Panc1 (cell line): ENCODE measurements at regions of chr10 and their contacts with region 1.

Region 1: GRCh38 chr10:43380610-43381222 is 9.3 kb downstream of the FXYD4 start:
- DNase-seq: no peak
- ATAC-seq: 0 out of 2 replicates have a peak, but pooled peaks have one; percentile 36
- H3K4me3 ChIP-seq: no peak overlapping the region
- H3K27ac ChIP-seq: peak overlapping the region; percentile 67; the same call in 1 of the 2 replicates
- H3K4me1 ChIP-seq: peaks cover 9% of the 10 kb centered on the region
- H3K27me3 ChIP-seq: no peaks in the 10 kb centered on the region
- CTCF ChIP-seq: no peak

Region 2: DNA sequence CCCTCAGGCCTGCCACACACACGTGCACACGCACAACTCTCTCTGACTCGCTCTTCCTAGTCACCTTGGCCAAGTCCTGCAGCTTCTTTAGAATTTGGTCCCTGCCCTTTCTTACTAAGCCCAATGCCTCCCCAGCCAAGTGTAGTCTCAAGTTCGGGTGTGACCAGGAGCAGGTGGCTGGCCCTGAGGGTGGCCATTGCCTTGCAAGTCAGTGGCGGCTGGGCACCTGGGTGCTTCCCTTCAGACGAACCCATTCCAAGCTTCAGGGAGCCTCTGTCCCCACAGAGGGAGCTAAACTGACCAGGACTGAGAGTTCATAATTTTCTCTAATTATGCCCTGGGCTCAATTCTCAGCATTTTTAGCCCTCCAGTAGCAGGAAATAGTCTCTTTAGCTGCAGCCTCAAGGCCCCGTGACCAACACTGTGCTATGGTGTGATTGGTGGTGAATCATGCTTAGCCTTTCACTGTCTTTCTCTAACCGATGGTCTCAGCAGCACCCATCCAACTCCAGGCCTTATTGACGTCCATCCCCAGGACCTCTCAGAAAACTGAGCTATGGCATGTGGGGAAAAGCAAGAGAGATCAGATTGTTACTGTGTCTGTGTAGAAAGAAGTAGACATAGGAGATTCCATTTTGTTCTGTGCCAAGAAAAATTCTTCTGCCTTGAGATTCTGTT is 43.9 kb before region 1 on chr10:
- CTCF ChIA-PET with region 1: interaction called, 5 read pairs
- POLR2A ChIA-PET with region 1: interaction called, 15 read pairs
- in situ Hi-C with region 1: no loop called
- intact Hi-C with region 1: no loop called
- DNase-seq: no peak
- ATAC-seq: no peak
- H3K4me3 ChIP-seq: no peak overlapping the region
- H3K27ac ChIP-seq: no peak overlapping the region
- H3K4me1 ChIP-seq: no peaks in the 10 kb centered on the region
- H3K27me3 ChIP-seq: no peaks in the 10 kb centered on the region
- CTCF ChIP-seq: no peak

Region 3: GRCh38 chr10:43354256-43354610 is 26.5 kb before region 1 on chr10:
- CTCF ChIA-PET with region 1: interaction called, 12 read pairs
- POLR2A ChIA-PET with region 1: no interaction called
- in situ Hi-C with region 1: no loop called
- intact Hi-C with region 1: no loop called
- DNase-seq: no peak
- ATAC-seq: 0 out of 2 replicates have a peak, but pooled peaks have one; percentile 36
- H3K4me3 ChIP-seq: no peak overlapping the region
- H3K27ac ChIP-seq: no peak overlapping the region
- H3K4me1 ChIP-seq: peaks cover 13% of the 10 kb centered on the region
- H3K27me3 ChIP-seq: no peaks in the 10 kb centered on the region
- CTCF ChIP-seq: no peak

Region 4: DNA sequence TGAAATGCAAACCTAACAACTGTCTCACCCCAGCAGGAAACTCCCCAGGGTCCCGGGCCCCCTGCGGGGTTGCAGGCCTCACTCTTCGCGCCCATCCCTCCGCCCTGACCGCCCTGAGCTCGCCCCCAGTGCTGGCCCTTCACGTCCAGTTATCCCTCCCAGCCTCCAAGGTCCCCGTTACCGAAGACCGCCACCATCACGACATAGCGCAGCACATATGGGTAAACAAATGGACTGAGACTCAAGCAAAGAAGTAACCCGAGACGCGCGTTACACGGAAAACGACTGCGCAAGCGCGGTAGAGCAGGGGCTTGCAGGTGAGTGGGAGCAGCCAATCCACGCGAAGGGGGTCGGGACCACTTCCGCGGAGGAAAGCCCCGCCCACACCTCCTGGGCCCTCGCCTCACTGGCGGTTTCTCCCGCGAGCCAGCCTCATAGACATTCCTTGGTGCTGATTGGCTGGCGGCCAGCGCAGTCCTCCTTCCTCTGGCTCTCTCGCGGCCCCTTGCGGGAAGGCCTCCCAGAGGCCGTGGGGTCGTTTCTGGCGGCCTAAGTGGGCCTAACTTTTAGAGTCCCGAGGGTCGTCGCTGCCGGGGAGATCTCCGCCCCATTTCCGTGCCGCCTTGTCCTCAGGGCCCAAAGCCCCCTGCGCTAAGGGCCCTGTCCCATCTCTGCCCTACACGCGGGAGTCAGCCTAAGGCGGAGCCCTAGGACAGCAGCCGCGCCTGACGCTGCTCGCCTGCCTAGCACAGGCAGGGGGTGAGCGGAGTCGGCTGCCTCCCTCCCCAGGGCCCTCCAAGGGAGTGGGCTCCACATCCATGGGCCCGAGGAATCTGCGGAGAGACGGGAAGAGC is 18.5 kb before region 1 on chr10:
- CTCF ChIA-PET with region 1: interaction called, 10 read pairs
- POLR2A ChIA-PET with region 1: no interaction called
- in situ Hi-C with region 1: no loop called
- intact Hi-C with region 1: no loop called
- DNase-seq: no peak
- ATAC-seq: peak; percentile 96
- H3K4me3 ChIP-seq: peak overlapping the region; percentile 55 to 76
- H3K27ac ChIP-seq: peak overlapping the region; percentile 81
- H3K4me1 ChIP-seq: peaks cover 10% of the 10 kb centered on the region
- H3K27me3 ChIP-seq: no peaks in the 10 kb centered on the region
- CTCF ChIP-seq: no peak

Region 5: DNA sequence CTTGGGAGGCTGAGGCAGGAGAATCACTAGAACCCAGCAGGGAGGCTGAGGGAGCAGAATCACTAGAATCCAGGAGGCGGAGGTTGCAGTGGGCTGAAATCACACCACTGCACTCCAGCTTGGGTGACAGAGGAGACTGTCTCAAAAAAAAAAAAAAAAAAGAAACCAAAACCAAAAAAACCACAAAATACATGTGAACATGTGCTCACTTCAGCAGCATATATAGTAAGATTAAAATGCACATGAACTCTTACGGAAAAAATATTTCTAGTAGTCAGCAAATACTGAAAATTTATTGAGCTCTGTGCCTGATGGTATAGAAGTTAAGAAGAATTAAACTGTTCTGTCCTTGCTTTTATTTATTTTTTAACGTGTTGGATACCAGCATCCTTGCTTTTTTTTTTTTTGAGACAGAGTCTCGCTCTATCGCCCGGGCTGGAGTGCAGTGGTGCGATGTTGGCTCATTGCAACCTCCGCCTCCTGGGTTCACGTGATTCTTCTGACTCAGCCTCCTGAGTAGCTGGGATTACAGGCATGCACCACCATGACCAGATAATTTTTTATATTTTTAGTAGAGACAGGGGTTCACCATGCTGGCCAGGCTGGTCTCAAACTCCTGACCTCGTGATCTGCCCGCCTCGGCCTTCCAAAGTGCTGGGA is 46.6 kb after region 1 on chr10:
- CTCF ChIA-PET with region 1: no interaction called
- POLR2A ChIA-PET with region 1: interaction called, 14 read pairs
- in situ Hi-C with region 1: no loop called
- intact Hi-C with region 1: no loop called
- DNase-seq: no peak
- ATAC-seq: no peak
- H3K4me3 ChIP-seq: no peak overlapping the region
- H3K27ac ChIP-seq: no peak overlapping the region
- H3K4me1 ChIP-seq: no peaks in the 10 kb centered on the region
- H3K27me3 ChIP-seq: no peaks in the 10 kb centered on the region
- CTCF ChIP-seq: no peak

Region 6: GRCh38 chr10:43479275-43479674 is 98.6 kb after region 1 on chr10:
- CTCF ChIA-PET with region 1: no interaction called
- POLR2A ChIA-PET with region 1: no interaction called
- in situ Hi-C with region 1: no loop called
- intact Hi-C with region 1: no loop called
- DNase-seq: no peak
- ATAC-seq: no peak
- H3K4me3 ChIP-seq: no peak overlapping the region
- H3K27ac ChIP-seq: no peak overlapping the region
- H3K4me1 ChIP-seq: no peaks in the 10 kb centered on the region
- H3K27me3 ChIP-seq: no peaks in the 10 kb centered on the region
- CTCF ChIP-seq: no peak

Region 7: DNA sequence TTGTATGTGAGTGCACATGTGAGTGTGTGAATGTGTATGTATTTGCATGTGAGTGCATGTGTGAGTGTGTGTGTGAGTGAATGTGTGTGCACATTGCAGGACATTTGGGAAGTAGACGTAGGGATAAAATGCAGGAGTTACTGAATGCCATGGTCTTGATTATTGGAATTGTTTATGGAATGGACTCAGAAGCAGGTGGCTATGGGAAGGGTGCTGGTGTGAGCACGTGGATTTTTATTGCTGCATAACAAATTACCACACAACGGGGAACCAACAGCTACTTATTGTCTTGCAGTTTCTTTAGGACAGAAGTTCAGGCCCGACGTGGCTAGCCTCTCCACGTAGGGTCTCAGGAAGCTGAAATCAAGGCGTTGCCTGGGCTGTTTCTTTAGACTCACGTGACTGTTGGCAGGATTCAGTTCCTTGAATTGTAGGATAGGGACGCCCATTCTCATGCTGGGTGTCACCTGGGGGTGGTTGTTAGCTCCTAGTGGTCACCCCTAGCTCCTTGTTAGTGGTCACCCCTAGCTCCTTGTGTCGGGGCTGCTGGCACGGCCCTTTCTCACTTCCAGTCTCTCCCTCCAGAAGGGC is 316.3 kb after region 1 on chr10:
- CTCF ChIA-PET with region 1: no interaction called
- POLR2A ChIA-PET with region 1: no interaction called
- in situ Hi-C with region 1: no loop called
- intact Hi-C with region 1: no loop called
- DNase-seq: no peak
- ATAC-seq: no peak
- H3K4me3 ChIP-seq: no peak overlapping the region
- H3K27ac ChIP-seq: no peak overlapping the region
- H3K4me1 ChIP-seq: no peaks in the 10 kb centered on the region
- H3K27me3 ChIP-seq: peaks cover 4% of the 10 kb centered on the region
- CTCF ChIP-seq: no peak

Region 8: GRCh38 chr10:44233561-44234482 is 853.1 kb after region 1 on chr10:
- CTCF ChIA-PET with region 1: no interaction called
- POLR2A ChIA-PET with region 1: no interaction called
- in situ Hi-C with region 1: no loop called
- intact Hi-C with region 1: no loop called
- DNase-seq: no peak
- ATAC-seq: no peak
- H3K4me3 ChIP-seq: no peak overlapping the region
- H3K27ac ChIP-seq: no peak overlapping the region
- H3K4me1 ChIP-seq: no peaks in the 10 kb centered on the region
- H3K27me3 ChIP-seq: no peaks in the 10 kb centered on the region
- CTCF ChIP-seq: no peak